ENCODE measurements at regions of chr3 and their contacts with region 1.

Region 1: DNA sequence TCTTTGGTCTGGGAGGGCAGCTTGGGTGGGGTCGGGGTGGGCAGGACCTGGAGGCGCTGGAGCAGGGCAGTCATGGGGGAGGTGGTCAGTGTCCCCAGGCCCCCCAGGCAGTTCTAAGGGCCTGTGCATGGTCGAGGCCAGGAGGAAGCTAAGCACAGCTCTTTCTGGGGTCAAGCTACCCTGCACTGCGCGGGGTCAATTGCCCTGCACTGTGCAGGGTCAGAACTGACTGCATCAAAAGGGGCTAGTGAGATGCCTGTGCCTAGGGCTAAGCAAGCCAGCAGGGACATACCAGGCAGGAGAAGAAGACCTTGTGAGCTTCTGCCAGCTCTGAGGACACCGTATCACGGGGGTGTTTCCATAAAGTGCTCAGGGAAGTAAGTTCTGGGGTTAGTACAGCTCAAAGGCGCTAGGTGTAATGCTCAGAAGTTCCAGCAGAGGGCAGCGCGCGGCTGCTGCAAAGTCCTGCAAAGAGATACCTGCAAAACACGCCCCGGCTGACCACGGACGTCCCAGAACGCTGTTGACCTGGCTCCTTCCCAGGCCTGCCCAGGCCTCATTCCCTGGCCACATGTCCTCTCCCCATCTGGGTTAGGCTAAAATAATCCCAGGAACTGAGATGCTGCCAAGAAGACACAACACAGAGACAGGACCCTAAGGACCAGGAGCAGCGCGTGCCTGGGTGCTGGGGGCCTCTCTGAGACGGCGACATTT is 18.8 kb upstream of the IQSEC1 start:
- DNase-seq: peak; percentile 92
- ATAC-seq: peak; percentile 43
- H3K4me3 ChIP-seq: no peak overlapping the region
- H3K4me3 Mint-ChIP-seq: no peak overlapping the region
- H3K27ac ChIP-seq: no peak overlapping the region
- H3K27ac Mint-ChIP-seq: peak overlapping the region; percentile 59
- H3K4me1 ChIP-seq: peaks cover 47 to 67% of the 10 kb centered on the region in 2 donors
- H3K4me1 Mint-ChIP-seq: peaks cover 67% of the 10 kb centered on the region
- H3K27me3 ChIP-seq: peaks cover 0 to 14% (median 2%) of the 10 kb centered on the region in 4 experiments
- H3K27me3 Mint-ChIP-seq: peaks cover 16% of the 10 kb centered on the region
- CTCF ChIP-seq: peak; percentile 92

Region 2: GRCh38 chr3:12875857-12876836 is 215.9 kb before region 1 on chr3:
- CTCF ChIA-PET with region 1: no interaction called
- POLR2A ChIA-PET with region 1: no interaction called
- intact Hi-C with region 1: no loop called
- DNase-seq: peak; percentile 55
- ATAC-seq: peak; percentile 81
- H3K4me3 ChIP-seq: peak overlapping the region in 2 of 5 experiments; percentile 12 to 27
- H3K4me3 Mint-ChIP-seq: peak overlapping the region; percentile 39
- H3K27ac ChIP-seq: no peak overlapping the region
- H3K27ac Mint-ChIP-seq: peak overlapping the region; percentile 20
- H3K4me1 ChIP-seq: peaks cover 8 to 14% of the 10 kb centered on the region in 2 donors
- H3K4me1 Mint-ChIP-seq: peaks cover 9% of the 10 kb centered on the region
- H3K27me3 ChIP-seq: peaks cover 0 to 24% (median 4%) of the 10 kb centered on the region in 4 experiments
- H3K27me3 Mint-ChIP-seq: peaks cover 7% of the 10 kb centered on the region
- CTCF ChIP-seq: peak; percentile 9

Region 3: GRCh38 chr3:12973827-12974226 is 118.2 kb before region 1 on chr3:
- CTCF ChIA-PET with region 1: no interaction called
- POLR2A ChIA-PET with region 1: no interaction called
- intact Hi-C with region 1: no loop called
- DNase-seq: peak; percentile 75
- ATAC-seq: peak; percentile 62
- H3K4me3 ChIP-seq: no peak overlapping the region
- H3K4me3 Mint-ChIP-seq: no peak overlapping the region
- H3K27ac ChIP-seq: peak overlapping the region in 1 of 2 donors; percentile 49
- H3K27ac Mint-ChIP-seq: peak overlapping the region; percentile 76
- H3K4me1 ChIP-seq: peaks cover 22 to 62% of the 10 kb centered on the region in 2 donors
- H3K4me1 Mint-ChIP-seq: peaks cover 72% of the 10 kb centered on the region
- H3K27me3 ChIP-seq: no peaks in the 10 kb centered on the region
- H3K27me3 Mint-ChIP-seq: no peaks in the 10 kb centered on the region
- CTCF ChIP-seq: no peak

Region 4: DNA sequence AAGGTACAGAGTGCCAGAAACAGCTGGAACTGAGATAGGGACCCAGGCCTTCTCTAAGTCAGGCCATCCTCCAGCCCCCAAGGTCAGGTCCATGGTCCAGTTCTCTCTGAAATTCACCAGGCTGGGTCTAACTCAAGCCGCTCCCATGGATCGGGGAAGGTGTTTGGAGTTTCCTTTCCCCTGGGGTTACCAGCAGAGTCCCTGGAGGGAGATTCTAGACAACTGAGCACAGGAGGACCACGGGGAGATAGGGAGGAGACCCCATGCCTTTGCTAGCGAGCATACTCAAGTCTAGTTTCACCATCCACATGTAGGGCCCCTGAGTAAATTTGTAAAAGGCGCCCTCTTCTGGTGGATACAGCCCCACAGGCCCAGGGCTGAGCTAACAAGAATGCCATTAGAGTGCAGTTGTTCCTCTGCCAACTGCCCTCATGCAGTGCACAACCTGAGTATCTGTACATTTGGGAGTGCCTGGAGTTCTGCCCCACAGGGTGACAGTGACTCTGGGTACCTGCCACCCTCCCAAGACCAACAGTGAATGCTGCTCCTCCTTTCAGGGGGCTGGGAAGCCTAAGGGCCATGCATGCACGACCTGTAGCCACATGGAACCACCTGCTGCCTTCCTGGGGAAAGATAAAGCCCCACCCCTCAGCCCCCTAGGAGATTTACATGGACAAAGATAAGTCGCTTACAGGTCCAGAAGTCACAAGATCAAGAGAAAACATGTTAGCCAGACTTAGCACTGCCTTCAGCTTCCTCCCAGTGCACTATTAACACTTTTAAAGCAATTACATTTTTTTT is 107.8 kb before region 1 on chr3:
- CTCF ChIA-PET with region 1: interaction called, 10 read pairs
- POLR2A ChIA-PET with region 1: no interaction called
- intact Hi-C with region 1: no loop called
- DNase-seq: peak; percentile 79
- ATAC-seq: peak; percentile 66
- H3K4me3 ChIP-seq: no peak overlapping the region
- H3K4me3 Mint-ChIP-seq: no peak overlapping the region
- H3K27ac ChIP-seq: peak overlapping the region in 1 of 2 donors; percentile 63
- H3K27ac Mint-ChIP-seq: peak overlapping the region; percentile 73
- H3K4me1 ChIP-seq: peaks cover 54 to 69% of the 10 kb centered on the region in 2 donors
- H3K4me1 Mint-ChIP-seq: peaks cover 69% of the 10 kb centered on the region
- H3K27me3 ChIP-seq: no peaks in the 10 kb centered on the region
- H3K27me3 Mint-ChIP-seq: no peaks in the 10 kb centered on the region
- CTCF ChIP-seq: peak; percentile 74

Region 5: DNA sequence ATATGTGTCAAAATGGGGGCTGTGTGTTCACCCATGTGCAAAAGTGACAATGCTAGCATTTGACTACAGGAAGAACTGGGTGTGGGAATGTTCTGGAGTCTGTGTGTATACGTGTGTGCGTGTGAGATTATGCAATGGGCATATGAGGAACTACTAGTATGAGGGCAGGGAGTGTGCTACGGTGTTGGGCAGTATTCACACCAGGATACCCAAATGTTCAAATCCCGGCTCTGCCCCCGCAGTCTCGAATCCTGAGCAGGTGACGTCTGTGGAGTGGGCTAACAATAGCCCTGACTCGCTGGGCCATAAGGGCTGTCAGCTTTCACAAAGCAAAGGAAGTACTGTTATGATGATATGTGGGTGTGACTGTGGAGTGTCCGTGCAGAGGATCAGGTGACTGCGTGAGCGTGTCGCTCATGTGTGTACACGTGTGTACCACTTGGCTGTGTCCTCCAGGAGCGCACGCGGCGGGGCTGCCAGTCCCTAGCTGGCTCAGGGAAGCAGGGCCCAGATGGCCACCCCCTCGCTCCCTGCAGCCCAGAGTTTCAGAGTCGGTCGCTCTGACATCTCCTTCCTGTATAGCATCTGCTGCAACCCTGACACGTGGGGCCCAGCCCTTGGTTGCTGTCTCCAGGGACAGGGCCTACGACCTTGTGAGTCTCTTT is 46.0 kb before region 1 on chr3:
- CTCF ChIA-PET with region 1: interaction called, 5 read pairs
- POLR2A ChIA-PET with region 1: interaction called, 7 read pairs
- intact Hi-C with region 1: loop called (anchors 1 kb)
- DNase-seq: peak; percentile 90
- ATAC-seq: peak; percentile 92
- H3K4me3 ChIP-seq: peak overlapping the region in 2 of 5 experiments; percentile 26 to 42
- H3K4me3 Mint-ChIP-seq: peak overlapping the region; percentile 90
- H3K27ac ChIP-seq: peak overlapping the region; percentile 89
- H3K27ac Mint-ChIP-seq: peak overlapping the region; percentile 87
- H3K4me1 ChIP-seq: peaks cover 63 to 71% of the 10 kb centered on the region in 2 donors
- H3K4me1 Mint-ChIP-seq: peaks cover 70% of the 10 kb centered on the region
- H3K27me3 ChIP-seq: no peaks in the 10 kb centered on the region
- H3K27me3 Mint-ChIP-seq: no peaks in the 10 kb centered on the region
- CTCF ChIP-seq: no peak

Region 6: DNA sequence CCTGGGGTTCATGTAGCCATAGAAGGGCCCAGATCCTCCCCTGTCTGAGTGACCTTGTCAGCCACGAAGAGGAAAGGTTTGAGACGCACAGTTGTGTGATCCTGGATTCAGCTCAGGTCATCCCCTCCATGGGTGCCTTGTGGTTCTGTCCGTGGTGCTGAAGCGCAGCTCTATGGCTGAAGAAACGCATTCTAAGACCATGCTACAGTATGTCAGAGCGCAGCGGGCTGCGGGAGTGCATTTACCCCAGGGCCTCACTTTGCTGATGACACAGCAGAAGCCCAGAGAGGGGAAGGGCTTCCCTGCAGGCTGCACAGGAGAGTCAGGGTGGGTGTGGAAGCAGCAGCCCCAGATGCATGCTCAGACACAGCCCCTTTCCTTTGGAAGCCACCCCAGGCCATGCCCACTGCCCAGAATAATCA is 49.9 kb after region 1 on chr3:
- CTCF ChIA-PET with region 1: interaction called, 6 read pairs
- POLR2A ChIA-PET with region 1: no interaction called
- intact Hi-C with region 1: loop called (anchors 10 kb)
- DNase-seq: no peak
- ATAC-seq: no peak
- H3K4me3 ChIP-seq: no peak overlapping the region
- H3K4me3 Mint-ChIP-seq: no peak overlapping the region
- H3K27ac ChIP-seq: no peak overlapping the region
- H3K27ac Mint-ChIP-seq: no peak overlapping the region
- H3K4me1 ChIP-seq: no peaks in the 10 kb centered on the region
- H3K4me1 Mint-ChIP-seq: no peaks in the 10 kb centered on the region
- H3K27me3 ChIP-seq: peaks cover 0 to 15% (median 3%) of the 10 kb centered on the region in 4 experiments
- H3K27me3 Mint-ChIP-seq: peaks cover 28% of the 10 kb centered on the region
- CTCF ChIP-seq: no peak

Region 7: GRCh38 chr3:13308380-13308801 is 216.3 kb after region 1 on chr3:
- CTCF ChIA-PET with region 1: interaction called, 15 read pairs
- POLR2A ChIA-PET with region 1: no interaction called
- intact Hi-C with region 1: loop called (anchors 1 kb)
- DNase-seq: peak; percentile 60
- ATAC-seq: peak; percentile 28
- H3K4me3 ChIP-seq: no peak overlapping the region
- H3K4me3 Mint-ChIP-seq: no peak overlapping the region
- H3K27ac ChIP-seq: no peak overlapping the region
- H3K27ac Mint-ChIP-seq: no peak overlapping the region
- H3K4me1 ChIP-seq: no peaks in the 10 kb centered on the region
- H3K4me1 Mint-ChIP-seq: peaks cover 2% of the 10 kb centered on the region
- H3K27me3 ChIP-seq: no peaks in the 10 kb centered on the region
- H3K27me3 Mint-ChIP-seq: no peaks in the 10 kb centered on the region
- CTCF ChIP-seq: peak; percentile 49

Region 8: GRCh38 chr3:13353936-13354542 is 262.0 kb after region 1 on chr3:
- CTCF ChIA-PET with region 1: interaction called, 10 read pairs
- POLR2A ChIA-PET with region 1: no interaction called
- intact Hi-C with region 1: no loop called
- DNase-seq: no peak
- ATAC-seq: no peak
- H3K4me3 ChIP-seq: no peak overlapping the region
- H3K4me3 Mint-ChIP-seq: no peak overlapping the region
- H3K27ac ChIP-seq: no peak overlapping the region
- H3K27ac Mint-ChIP-seq: peak overlapping the region; percentile 68
- H3K4me1 ChIP-seq: peaks cover 0 to 12% of the 10 kb centered on the region in 2 donors
- H3K4me1 Mint-ChIP-seq: peaks cover 15% of the 10 kb centered on the region
- H3K27me3 ChIP-seq: no peaks in the 10 kb centered on the region
- H3K27me3 Mint-ChIP-seq: no peaks in the 10 kb centered on the region
- CTCF ChIP-seq: no peak